Caco-2 (cell line): ENCODE measurements at regions of chr16 and their contacts with region 1.

Region 1: GRCh38 chr16:89706507-89707263 is 5.2 kb upstream of the SPATA2L start:
- DNase-seq: no peak
- H3K4me3 ChIP-seq: no peak overlapping the region
- H3K4me3 Mint-ChIP-seq: no peak overlapping the region
- H3K27ac Mint-ChIP-seq: no peak overlapping the region
- H3K4me1 ChIP-seq: no peaks in the 10 kb centered on the region
- H3K4me1 Mint-ChIP-seq: no peaks in the 10 kb centered on the region
- H3K27me3 ChIP-seq: no peaks in the 10 kb centered on the region
- H3K27me3 Mint-ChIP-seq: no peaks in the 10 kb centered on the region
- CTCF ChIP-seq: no peak

Region 2: DNA sequence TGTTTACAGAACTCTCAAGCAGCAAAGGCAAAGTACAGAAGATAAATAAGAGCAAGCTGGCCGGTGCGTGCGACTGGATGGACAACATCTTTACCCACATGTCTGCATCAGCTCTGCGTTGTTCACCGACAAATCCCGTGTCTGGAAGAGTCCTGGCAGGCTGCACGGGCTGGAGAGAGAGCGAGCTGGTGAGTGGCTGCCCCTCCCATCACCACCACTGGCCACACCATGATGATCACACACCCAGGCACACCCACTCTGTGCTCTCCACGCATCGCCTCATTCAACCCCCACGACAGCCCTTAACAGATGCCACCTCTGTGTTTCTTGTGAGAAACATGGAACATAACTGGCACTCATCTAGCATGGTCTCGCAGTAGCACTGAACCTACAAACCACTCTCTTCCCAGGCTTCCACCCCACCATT is 275.5 kb before region 1 on chr16:
- CTCF ChIA-PET with region 1: no interaction called
- POLR2A ChIA-PET with region 1: no interaction called
- intact Hi-C with region 1: no loop called
- DNase-seq: no peak
- H3K4me3 ChIP-seq: no peak overlapping the region
- H3K4me3 Mint-ChIP-seq: no peak overlapping the region
- H3K27ac Mint-ChIP-seq: no peak overlapping the region
- H3K4me1 ChIP-seq: peaks cover 21% of the 10 kb centered on the region
- H3K4me1 Mint-ChIP-seq: peaks cover 6% of the 10 kb centered on the region
- H3K27me3 ChIP-seq: no peaks in the 10 kb centered on the region
- H3K27me3 Mint-ChIP-seq: no peaks in the 10 kb centered on the region
- CTCF ChIP-seq: no peak

Region 3: GRCh38 chr16:89693931-89694783 is 12.5 kb before region 1 on chr16:
- CTCF ChIA-PET with region 1: no interaction called
- POLR2A ChIA-PET with region 1: no interaction called
- intact Hi-C with region 1: no loop called
- DNase-seq: peak in 1 of 2 experiments; percentile 46
- H3K4me3 ChIP-seq: no peak overlapping the region
- H3K4me3 Mint-ChIP-seq: no peak overlapping the region
- H3K27ac Mint-ChIP-seq: peak overlapping the region; percentile 76
- H3K4me1 ChIP-seq: no peaks in the 10 kb centered on the region
- H3K4me1 Mint-ChIP-seq: peaks cover 4% of the 10 kb centered on the region
- H3K27me3 ChIP-seq: no peaks in the 10 kb centered on the region
- H3K27me3 Mint-ChIP-seq: no peaks in the 10 kb centered on the region
- CTCF ChIP-seq: no peak

Region 4: GRCh38 chr16:89793955-89794354 is 87.3 kb after region 1 on chr16:
- CTCF ChIA-PET with region 1: interaction called, 4 read pairs
- POLR2A ChIA-PET with region 1: no interaction called
- intact Hi-C with region 1: loop called (anchors 1 kb)
- DNase-seq: no peak
- H3K4me3 ChIP-seq: no peak overlapping the region
- H3K4me3 Mint-ChIP-seq: no peak overlapping the region
- H3K27ac Mint-ChIP-seq: no peak overlapping the region
- H3K4me1 ChIP-seq: no peaks in the 10 kb centered on the region
- H3K4me1 Mint-ChIP-seq: no peaks in the 10 kb centered on the region
- H3K27me3 ChIP-seq: no peaks in the 10 kb centered on the region
- H3K27me3 Mint-ChIP-seq: no peaks in the 10 kb centered on the region
- CTCF ChIP-seq: no peak